ENCODE measurements at regions of chr11 and their contacts with region 1.

Region 1: DNA sequence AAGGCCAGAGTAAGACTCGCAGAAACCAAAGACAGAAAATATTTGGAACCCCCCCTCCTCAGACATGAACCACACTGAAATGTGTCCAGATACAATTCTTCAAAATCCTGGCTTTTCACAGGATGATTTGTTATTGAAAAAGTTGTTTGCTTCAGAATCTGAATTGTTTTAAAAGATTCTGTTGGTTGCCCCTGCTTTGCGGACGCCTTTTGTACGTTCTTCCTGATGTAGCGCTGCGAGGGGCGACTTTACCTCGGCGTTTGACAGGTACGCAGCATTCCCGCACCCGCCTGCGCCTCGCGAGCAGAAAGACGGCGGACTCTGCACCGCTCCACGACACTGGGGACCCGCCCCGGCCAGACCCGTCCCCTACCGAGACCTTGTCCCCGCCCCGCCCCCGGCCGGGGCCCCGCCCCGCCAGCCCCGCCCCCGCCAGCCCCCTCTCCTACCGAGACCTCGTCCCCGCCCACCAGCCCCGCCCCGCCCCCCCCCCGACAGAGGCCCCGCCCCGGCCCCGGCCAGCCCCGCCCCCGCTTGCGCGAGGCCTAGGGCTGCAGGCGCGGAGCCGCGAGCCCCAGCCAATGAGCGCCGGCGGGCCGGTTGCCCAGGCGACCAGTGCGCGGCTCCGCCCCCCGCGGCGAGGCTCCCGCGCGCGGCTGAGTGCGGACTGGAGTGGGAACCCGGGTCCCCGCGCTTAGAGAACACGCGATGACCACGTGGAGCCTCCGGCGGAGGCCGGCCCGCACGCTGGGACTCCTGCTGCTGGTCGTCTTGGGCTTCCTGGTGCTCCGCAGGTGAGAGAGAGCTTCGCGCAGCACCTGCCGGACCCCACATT is at the start of gene GLB1L2:
- DNase-seq: peak; percentile 43 to 68
- ATAC-seq: peak; percentile 87 to 89
- H3K4me3 ChIP-seq: peak within 1 kb of the TSS; percentile 58 to 71 (median 68)
- H3K27ac ChIP-seq: no peak within 1 kb of the TSS
- H3K4me1 ChIP-seq: peaks cover 0 to 13% of the 10 kb centered on the region in 2 donors
- H3K27me3 ChIP-seq: peaks cover 0 to 6% (median 2%) of the 10 kb centered on the region in 3 donors
- CTCF ChIP-seq: no peak
- POLR2A ChIP-seq: no peak
- total RNA-seq, gene GLB1L2: 0.33 to 2.9 (median 0.76) TPM in 3 of 4 donors, not detected in the other

Region 2: DNA sequence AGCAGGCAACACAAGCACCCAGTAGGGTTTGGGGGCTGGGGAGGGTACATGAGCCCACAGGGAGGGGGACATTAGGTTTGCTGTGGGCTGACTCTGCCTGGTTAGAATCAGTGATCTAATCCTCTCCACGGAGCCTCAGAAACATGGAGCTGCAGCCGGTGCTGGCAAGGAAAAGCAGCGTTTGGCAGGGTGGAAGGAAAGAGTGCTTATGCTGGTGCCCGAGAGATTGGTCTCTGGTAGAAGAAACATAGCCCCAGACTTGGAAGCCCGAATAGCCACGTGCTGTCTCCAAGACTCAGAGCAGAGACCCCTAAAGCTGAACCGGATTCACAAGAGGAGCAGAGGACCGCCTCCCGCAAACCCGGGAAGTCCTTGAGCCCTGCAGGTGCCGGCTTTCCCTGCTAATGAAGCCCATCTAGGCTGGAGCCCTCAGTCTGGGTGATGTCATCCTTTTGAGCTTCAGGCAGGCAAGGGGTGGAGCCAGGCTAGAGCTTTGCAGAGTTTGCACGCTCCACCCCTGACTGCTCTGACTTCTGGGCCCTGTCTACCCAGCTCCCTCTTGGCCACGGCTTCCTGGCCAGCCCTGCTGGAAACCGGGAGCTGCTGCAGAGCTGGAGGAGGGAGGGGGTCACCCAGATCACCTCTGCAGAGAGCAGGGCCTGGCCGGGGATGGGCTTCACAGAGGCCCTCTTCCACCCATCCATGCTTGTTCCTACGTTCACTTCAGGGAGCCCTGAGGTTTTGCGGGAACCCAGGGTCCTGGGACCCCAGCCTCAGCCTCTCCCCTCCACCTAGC is 297.7 kb before region 1 on chr11:
- in situ Hi-C with region 1: no loop called
- intact Hi-C with region 1: loop called (anchors 10 kb)
- DNase-seq: peak; percentile 35 to 51
- ATAC-seq: peak; percentile 78 to 81
- H3K4me3 ChIP-seq: peak overlapping the region; percentile 22 to 47 (median 32)
- H3K27ac ChIP-seq: peak overlapping the region; percentile 56 to 73 (median 64)
- H3K4me1 ChIP-seq: peaks cover 27 to 37% of the 10 kb centered on the region in 2 donors
- H3K27me3 ChIP-seq: no peaks in the 10 kb centered on the region
- CTCF ChIP-seq: no peak
- POLR2A ChIP-seq: peak in 1 of 2 donors; percentile 29

Region 3: GRCh38 chr11:134253188-134253993 is 78.2 kb before region 1 on chr11 and contains the starts of genes ACAD8 and THYN1:
- in situ Hi-C with region 1: no loop called
- intact Hi-C with region 1: loop called (anchors 1 kb)
- DNase-seq: peak; percentile 96
- ATAC-seq: peak; percentile 96 to 97
- H3K4me3 ChIP-seq: peak within 1 kb of the TSS; percentile 95 to 100 (median 96)
- H3K27ac ChIP-seq: peak within 1 kb of the TSS; percentile 70 to 87 (median 82)
- H3K4me1 ChIP-seq: peaks cover 24 to 30% of the 10 kb centered on the region in 2 donors
- H3K27me3 ChIP-seq: no peaks in the 10 kb centered on the region
- CTCF ChIP-seq: peak; percentile 49 to 75 (median 60)
- POLR2A ChIP-seq: peak; percentile 61 to 62
- total RNA-seq, gene ACAD8: 19.4 to 29.6 (median 24.7) TPM
- total RNA-seq, gene THYN1: 12.7 to 27.8 (median 17.2) TPM

Region 4: DNA sequence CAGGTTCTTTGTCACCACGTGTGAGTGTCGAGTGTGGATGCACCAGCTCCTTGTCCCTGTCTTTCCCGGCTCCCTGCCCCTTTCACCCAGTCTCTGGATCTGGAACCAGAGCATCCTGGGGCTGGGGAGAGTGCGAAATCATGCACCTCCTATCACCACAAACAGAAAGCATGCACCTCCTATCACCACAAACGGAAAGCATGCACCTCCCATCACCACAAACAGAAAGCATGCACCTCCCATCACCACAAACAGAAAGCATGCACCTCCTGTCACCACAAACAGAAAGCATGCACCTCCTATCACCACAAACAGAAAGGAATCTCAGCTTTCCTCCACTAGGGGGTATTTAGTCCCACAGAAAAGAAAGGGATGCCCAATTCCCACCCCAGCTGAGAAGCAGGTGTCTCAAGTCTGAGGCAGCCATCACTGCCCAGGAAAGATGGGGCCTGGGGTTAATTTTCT is 61.3 kb before region 1 on chr11:
- in situ Hi-C with region 1: no loop called
- intact Hi-C with region 1: no loop called
- DNase-seq: no peak
- ATAC-seq: no peak
- H3K4me3 ChIP-seq: no peak overlapping the region
- H3K27ac ChIP-seq: no peak overlapping the region
- H3K4me1 ChIP-seq: no peaks in the 10 kb centered on the region
- H3K27me3 ChIP-seq: peaks cover 35 to 45% (median 38%) of the 10 kb centered on the region in 3 donors
- CTCF ChIP-seq: no peak
- POLR2A ChIP-seq: no peak

Region 5: GRCh38 chr11:134385773-134386565 is 54.4 kb after region 1 on chr11:
- in situ Hi-C with region 1: no loop called
- intact Hi-C with region 1: no loop called
- DNase-seq: no peak
- ATAC-seq: no peak
- H3K4me3 ChIP-seq: no peak overlapping the region
- H3K27ac ChIP-seq: no peak overlapping the region
- H3K4me1 ChIP-seq: peaks cover 3 to 8% of the 10 kb centered on the region in 2 donors
- H3K27me3 ChIP-seq: peaks cover 0 to 8% (median 6%) of the 10 kb centered on the region in 3 donors
- CTCF ChIP-seq: no peak
- POLR2A ChIP-seq: no peak